GM18951 (cell line): ENCODE measurements at regions of chr11 and their contacts with region 1.

Region 1: GRCh38 chr11:20647976-20648565 is 21.3 kb upstream of the NELL1 start:
- POLR2A ChIP-seq: no peak

Region 2: GRCh38 chr11:20443596-20443995 is 204.5 kb before region 1 on chr11:
- in situ Hi-C with region 1: no loop called
- POLR2A ChIP-seq: no peak

Region 3: DNA sequence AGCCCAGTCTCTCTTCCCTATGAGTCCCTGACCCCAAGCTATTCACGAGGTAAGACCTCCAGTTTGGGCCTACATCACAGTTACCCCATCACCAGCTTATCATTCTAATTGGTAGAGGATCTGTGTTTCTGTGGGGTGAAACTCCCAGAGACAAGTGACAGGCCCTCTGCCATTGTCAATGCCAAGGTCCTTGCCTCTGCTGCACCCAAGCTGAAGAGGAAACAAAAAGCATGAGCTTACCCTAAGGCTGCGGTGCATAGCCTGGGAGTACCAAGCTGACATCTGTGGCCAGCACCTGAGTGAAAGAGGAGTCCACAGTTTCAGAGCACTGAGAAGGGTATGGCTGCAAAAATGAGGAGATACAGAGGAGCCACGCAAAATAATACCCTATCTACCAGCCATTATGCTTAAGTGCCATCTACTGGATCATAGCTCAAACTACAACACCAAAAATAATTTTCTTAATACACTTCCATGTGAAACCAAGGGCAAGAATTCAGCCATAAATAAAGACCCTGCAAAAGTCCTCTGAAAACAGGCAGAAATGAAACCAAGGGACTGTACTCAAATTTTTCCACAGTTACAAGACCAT is 1482.5 kb after region 1 on chr11:
- in situ Hi-C with region 1: loop called (anchors 25 kb)
- POLR2A ChIP-seq: no peak